Gastrocnemius medialis (tissue), 4 donors: ENCODE measurements at regions of chr10 and their contacts with region 1.

Region 1: GRCh38 chr10:129023082-129023481 is 444.0 kb upstream of the MGMT start:
- DNase-seq: peak in 1 of 2 donors; percentile 44
- ATAC-seq: peak; percentile 47 to 50
- H3K4me3 ChIP-seq: no peak overlapping the region
- H3K27ac ChIP-seq: peak overlapping the region; percentile 5 to 55 (median 36)
- H3K4me1 ChIP-seq: no peaks in the 10 kb centered on the region
- H3K27me3 ChIP-seq: peaks cover 0 to 21% (median 17%) of the 10 kb centered on the region in 3 donors
- CTCF ChIP-seq: no peak
- POLR2A ChIP-seq: no peak

Region 2: DNA sequence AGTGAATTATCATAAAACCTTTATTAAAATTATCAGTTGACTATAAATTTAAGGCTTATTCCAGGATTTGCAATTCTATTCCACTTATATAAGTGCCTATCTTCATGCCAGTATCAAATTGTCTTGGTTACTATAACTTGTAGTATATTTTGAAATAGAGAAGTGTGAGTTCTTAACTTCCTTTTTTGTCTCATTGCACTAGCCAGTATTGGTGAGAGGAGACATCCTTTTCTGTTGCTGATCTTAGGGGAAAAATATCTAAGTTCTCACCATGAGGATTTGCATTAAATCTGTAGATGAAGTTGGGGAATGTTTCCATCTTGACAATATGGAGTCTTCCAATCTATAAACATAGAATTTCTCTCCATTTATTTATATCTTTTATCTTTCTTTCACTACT is 792.7 kb before region 1 on chr10:
- in situ Hi-C with region 1: no loop called
- intact Hi-C with region 1: no loop called
- DNase-seq: no peak
- ATAC-seq: no peak
- H3K4me3 ChIP-seq: no peak overlapping the region
- H3K27ac ChIP-seq: no peak overlapping the region
- H3K4me1 ChIP-seq: no peaks in the 10 kb centered on the region
- H3K27me3 ChIP-seq: peaks cover 0 to 12% (median 3%) of the 10 kb centered on the region in 3 donors
- CTCF ChIP-seq: no peak
- POLR2A ChIP-seq: no peak

Region 3: GRCh38 chr10:128859738-128860386 is 163.2 kb before region 1 on chr10:
- in situ Hi-C with region 1: no loop called
- intact Hi-C with region 1: loop called (anchors 10 kb)
- DNase-seq: no peak
- ATAC-seq: no peak
- H3K4me3 ChIP-seq: no peak overlapping the region
- H3K27ac ChIP-seq: no peak overlapping the region
- H3K4me1 ChIP-seq: no peaks in the 10 kb centered on the region
- H3K27me3 ChIP-seq: no peaks in the 10 kb centered on the region
- CTCF ChIP-seq: peak in 4 of 5 experiments; percentile 7 to 52 (median 29)
- POLR2A ChIP-seq: no peak

Region 4: GRCh38 chr10:128929767-128930166 is 93.3 kb before region 1 on chr10:
- in situ Hi-C with region 1: no loop called
- intact Hi-C with region 1: loop called (anchors 10 kb)
- DNase-seq: no peak
- ATAC-seq: peak in 1 of 2 donors; percentile 41
- H3K4me3 ChIP-seq: no peak overlapping the region
- H3K27ac ChIP-seq: no peak overlapping the region
- H3K4me1 ChIP-seq: peaks cover 0 to 8% of the 10 kb centered on the region in 2 donors
- H3K27me3 ChIP-seq: peaks cover 9 to 13% (median 11%) of the 10 kb centered on the region in 3 donors
- CTCF ChIP-seq: no peak
- POLR2A ChIP-seq: no peak

Region 5: GRCh38 chr10:129404091-129404490 is 381.0 kb after region 1 on chr10:
- in situ Hi-C with region 1: no loop called
- intact Hi-C with region 1: no loop called
- DNase-seq: no peak
- ATAC-seq: no peak
- H3K4me3 ChIP-seq: no peak overlapping the region
- H3K27ac ChIP-seq: no peak overlapping the region
- H3K4me1 ChIP-seq: no peaks in the 10 kb centered on the region
- H3K27me3 ChIP-seq: no peaks in the 10 kb centered on the region
- CTCF ChIP-seq: no peak
- POLR2A ChIP-seq: no peak